Activated naive CD4-positive, alpha-beta T cell treated with anti-CD3 and anti-CD28 coated beads for 36 hours (primary cell): ENCODE measurements at regions of chr19 and their contacts with region 1.

Region 1: DNA sequence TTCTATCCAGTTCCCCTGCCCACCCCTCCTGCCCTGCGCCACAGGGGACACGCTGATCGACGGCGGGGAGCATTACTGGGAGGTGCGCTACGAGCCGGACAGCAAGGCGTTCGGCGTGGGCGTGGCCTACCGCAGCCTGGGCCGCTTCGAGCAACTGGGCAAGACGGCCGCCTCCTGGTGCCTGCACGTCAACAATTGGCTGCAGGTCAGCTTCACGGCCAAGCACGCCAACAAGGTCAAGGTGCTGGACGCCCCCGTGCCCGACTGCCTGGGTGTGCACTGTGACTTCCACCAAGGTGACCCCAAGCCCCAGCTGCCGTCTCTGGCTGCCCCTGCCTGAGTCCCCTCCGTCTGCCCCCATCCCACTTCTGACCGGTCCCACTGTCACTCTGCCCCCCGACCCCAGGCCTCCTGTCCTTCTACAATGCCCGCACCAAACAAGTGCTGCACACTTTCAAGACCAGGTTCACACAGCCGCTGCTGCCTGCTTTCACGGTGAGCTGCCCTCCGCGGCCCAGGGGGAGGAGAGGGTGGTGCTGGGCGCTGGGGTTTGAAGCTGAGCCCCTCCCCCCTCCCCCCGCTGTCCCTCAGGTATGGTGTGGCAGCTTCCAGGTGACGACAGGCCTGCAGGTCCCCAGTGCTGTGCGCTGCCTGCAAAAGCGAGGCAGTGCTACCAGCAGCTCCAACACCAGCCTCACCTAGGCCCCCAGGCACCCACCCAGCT is 15.5 kb downstream of the STAP2 start:
- DNase-seq: no peak
- H3K4me3 Mint-ChIP-seq: no peak overlapping the region
- H3K27ac Mint-ChIP-seq: no peak overlapping the region
- H3K4me1 Mint-ChIP-seq: peaks cover 17% of the 10 kb centered on the region
- H3K27me3 Mint-ChIP-seq: no peaks in the 10 kb centered on the region

Region 2: GRCh38 chr19:4130744-4131438 is 192.2 kb before region 1 on chr19:
- CTCF ChIA-PET with region 1: no interaction called
- intact Hi-C with region 1: no loop called
- DNase-seq: no peak
- H3K4me3 Mint-ChIP-seq: no peak overlapping the region
- H3K27ac Mint-ChIP-seq: no peak overlapping the region
- H3K4me1 Mint-ChIP-seq: no peaks in the 10 kb centered on the region
- H3K27me3 Mint-ChIP-seq: no peaks in the 10 kb centered on the region

Region 3: GRCh38 chr19:4352701-4353121 is 29.6 kb after region 1 on chr19:
- CTCF ChIA-PET with region 1: interaction called, 15 read pairs
- intact Hi-C with region 1: no loop called
- DNase-seq: peak; percentile 62
- H3K4me3 Mint-ChIP-seq: no peak overlapping the region
- H3K27ac Mint-ChIP-seq: no peak overlapping the region
- H3K4me1 Mint-ChIP-seq: peaks cover 2% of the 10 kb centered on the region
- H3K27me3 Mint-ChIP-seq: no peaks in the 10 kb centered on the region